Posterior vena cava (tissue), 2 donors: ENCODE measurements at regions of chr22 and their contacts with region 1.

Region 1: DNA sequence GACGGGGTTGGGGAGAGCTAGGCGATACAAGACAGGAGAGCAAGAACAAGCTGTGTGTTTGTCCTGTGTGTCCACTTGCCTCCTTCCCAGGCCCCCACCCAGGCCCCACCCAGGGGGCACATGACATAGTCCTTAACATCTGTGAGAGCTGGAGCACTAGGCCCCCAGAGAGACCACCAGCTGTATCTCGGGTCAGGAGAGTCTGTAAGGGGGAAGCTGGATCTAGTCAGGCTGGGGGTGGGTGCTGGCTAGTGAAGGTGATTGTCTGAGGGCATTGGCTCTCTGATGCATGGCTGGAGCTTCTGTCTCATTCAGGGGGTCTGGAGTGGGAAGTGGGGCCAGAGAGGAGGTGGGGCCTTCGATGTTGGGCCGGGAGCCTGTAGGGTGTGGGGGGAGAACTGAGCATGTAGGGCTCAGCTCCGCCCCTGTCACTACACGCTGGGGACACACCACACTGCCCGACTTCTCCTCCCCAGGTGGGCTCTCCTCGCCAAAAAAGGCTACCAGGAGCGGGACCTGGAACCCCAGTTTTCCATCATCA is 571 bp downstream of the P2RX6 start:
- DNase-seq: peak; percentile 73

Region 2: GRCh38 chr22:21067655-21068382 is 52.3 kb after region 1 on chr22:
- intact Hi-C with region 1: loop called in 1 of 2 experiments (anchors 2 kb)
- DNase-seq: peak; percentile 64